OCI-LY7 (cell line): ENCODE measurements at regions of chr11 and their contacts with region 1.

Region 1: GRCh38 chr11:57148621-57149020 is 33.1 kb upstream of the LRRC55 start:
- DNase-seq: no peak
- H3K4me3 ChIP-seq: no peak overlapping the region
- H3K27ac ChIP-seq: no peak overlapping the region
- H3K4me1 ChIP-seq: no peaks in the 10 kb centered on the region
- CTCF ChIP-seq: no peak

Region 2: DNA sequence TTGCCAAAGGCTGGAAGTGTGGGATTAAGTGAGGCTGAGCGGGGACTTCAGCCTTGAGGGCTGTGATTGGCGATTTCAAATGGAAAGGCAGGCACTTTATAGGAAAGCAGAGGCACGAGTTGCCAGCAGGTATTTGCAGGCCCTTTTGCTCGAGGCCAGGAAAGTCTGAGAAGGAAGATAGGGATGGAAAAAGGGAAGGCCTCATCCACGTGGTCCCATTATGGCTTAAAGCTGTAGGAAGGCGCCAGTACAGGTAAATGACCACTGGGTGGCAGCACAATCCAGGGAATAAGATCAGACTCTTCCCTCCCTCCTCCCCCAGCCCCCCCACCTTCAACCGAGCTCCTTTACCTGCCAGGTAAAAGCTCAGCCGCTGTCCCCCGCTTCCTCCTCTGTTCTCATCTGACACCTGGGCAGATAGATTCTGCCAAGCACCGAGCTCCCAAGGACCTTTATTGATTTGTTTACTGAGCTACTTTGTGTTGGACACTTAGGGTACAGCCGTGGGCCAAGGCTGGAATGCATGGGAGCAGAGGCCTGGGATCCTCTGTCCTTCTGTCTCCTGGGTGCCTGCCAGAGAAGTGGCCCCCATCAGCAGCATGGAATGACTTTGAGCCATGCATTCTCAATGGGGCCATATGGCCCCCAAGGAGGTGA is 197.1 kb after region 1 on chr11:
- CTCF ChIA-PET with region 1: no interaction called
- POLR2A ChIA-PET with region 1: no interaction called
- intact Hi-C with region 1: no loop called
- DNase-seq: peak; percentile 77
- H3K4me3 ChIP-seq: no peak overlapping the region
- H3K27ac ChIP-seq: no peak overlapping the region
- H3K4me1 ChIP-seq: peaks cover 4% of the 10 kb centered on the region
- CTCF ChIP-seq: peak; percentile 84

Region 3: GRCh38 chr11:57387289-57388030 is 238.8 kb after region 1 on chr11:
- CTCF ChIA-PET with region 1: no interaction called
- POLR2A ChIA-PET with region 1: interaction called, 10 read pairs
- intact Hi-C with region 1: no loop called
- DNase-seq: no peak
- H3K4me3 ChIP-seq: no peak overlapping the region
- H3K27ac ChIP-seq: no peak overlapping the region
- H3K4me1 ChIP-seq: no peaks in the 10 kb centered on the region
- CTCF ChIP-seq: no peak